Activated CD4-positive, alpha-beta memory T cell treated with anti-CD3 and anti-CD28 coated beads, Interleukin-2, amount 10 ng/mL, durations not matched to agents 7 days and 5 days (primary cell): ENCODE measurements at regions of chr5 and their contacts with region 1.

Region 1: GRCh38 chr5:160418561-160419457 is at the start of gene SLU7:
- DNase-seq: peak; percentile 94
- H3K4me3 Mint-ChIP-seq: peak within 1 kb of the TSS; percentile 90
- H3K27ac Mint-ChIP-seq: peak within 1 kb of the TSS; percentile 91
- H3K4me1 Mint-ChIP-seq: peaks cover 59% of the 10 kb centered on the region
- H3K27me3 Mint-ChIP-seq: no peaks in the 10 kb centered on the region
- total RNA-seq, gene SLU7: 65.5 to 72.7 TPM

Region 2: GRCh38 chr5:160399402-160400353 is 19.1 kb before region 1 on chr5 and contains the start of gene FAM200C:
- CTCF ChIA-PET with region 1: interaction called, 6 read pairs
- POLR2A ChIA-PET with region 1: interaction called, 14 read pairs
- DNase-seq: peak; percentile 75
- H3K4me3 Mint-ChIP-seq: peak within 1 kb of the TSS; percentile 75
- H3K27ac Mint-ChIP-seq: peak within 1 kb of the TSS; percentile 38
- H3K4me1 Mint-ChIP-seq: peaks cover 17% of the 10 kb centered on the region
- H3K27me3 Mint-ChIP-seq: no peaks in the 10 kb centered on the region
- total RNA-seq, gene FAM200C: 0.95 to 1.0 TPM

Region 3: DNA sequence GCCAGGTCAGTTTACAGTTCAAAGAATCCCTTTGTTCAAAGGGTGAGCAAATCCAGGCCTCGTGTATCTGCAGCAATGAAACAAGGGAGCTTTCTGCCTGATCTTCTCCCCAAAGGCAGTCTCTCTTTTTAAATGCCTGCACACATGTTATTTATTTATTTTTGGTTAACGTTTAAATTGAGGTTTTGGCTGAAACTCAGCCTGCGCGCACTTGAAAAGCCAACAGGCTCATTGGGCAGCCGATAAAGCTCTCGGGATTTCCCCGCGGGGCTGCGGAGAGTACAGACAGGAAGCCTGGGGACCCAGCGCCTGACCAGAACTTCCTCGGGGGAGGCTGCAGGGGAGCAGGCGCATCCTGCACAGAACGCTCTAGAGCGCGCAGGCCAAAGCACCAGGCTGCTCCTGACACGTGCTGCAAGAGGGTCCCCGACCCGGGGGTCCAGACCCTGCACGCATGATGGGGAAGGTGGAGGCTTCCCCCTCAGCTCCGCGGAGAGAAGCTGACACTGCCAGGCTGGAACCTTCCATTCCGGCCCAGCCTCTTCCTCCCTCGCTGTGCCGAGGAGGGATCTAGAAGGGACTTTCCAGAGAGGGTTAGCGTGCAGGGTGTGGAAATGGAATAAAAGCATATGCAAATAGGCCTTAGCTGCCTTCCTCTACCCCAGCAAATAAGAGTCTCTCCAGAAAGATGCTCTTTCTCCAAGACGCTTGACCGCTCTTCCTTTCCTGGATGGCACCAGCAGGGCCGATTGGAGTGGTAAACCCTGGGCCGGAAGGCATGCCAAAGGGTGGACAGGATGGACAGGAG is 49.0 kb after region 1 on chr5:
- CTCF ChIA-PET with region 1: interaction called, 3 read pairs
- POLR2A ChIA-PET with region 1: interaction called, 104 read pairs
- DNase-seq: peak; percentile 89
- H3K4me3 Mint-ChIP-seq: peak overlapping the region; percentile 99
- H3K27ac Mint-ChIP-seq: peak overlapping the region; percentile 99
- H3K4me1 Mint-ChIP-seq: peaks cover 71% of the 10 kb centered on the region
- H3K27me3 Mint-ChIP-seq: no peaks in the 10 kb centered on the region

Region 4: GRCh38 chr5:160475864-160476438 is 57.1 kb after region 1 on chr5:
- CTCF ChIA-PET with region 1: no interaction called
- POLR2A ChIA-PET with region 1: interaction called, 104 read pairs
- DNase-seq: no peak
- H3K4me3 Mint-ChIP-seq: peak overlapping the region; percentile 50
- H3K27ac Mint-ChIP-seq: peak overlapping the region; percentile 62
- H3K4me1 Mint-ChIP-seq: peaks cover 91% of the 10 kb centered on the region
- H3K27me3 Mint-ChIP-seq: no peaks in the 10 kb centered on the region

Region 5: DNA sequence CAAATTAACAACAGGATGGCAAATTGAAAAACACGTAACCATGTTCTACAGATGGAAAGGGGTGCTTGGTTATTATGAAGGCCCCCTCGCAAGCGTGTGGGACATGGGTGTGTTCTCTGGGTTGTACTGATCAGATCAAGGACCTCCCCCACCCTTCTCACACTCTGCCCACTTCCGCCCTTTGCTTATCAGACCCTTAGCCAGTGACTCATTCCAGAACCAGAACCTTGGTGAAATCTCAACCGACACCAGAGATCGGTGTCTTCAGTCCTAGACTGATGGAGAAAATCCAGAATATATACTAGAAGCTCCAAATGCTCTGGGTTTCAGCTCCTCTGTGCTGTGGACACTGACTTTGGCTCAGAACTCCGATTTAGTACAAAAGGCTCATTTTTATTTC is 67.8 kb after region 1 on chr5:
- CTCF ChIA-PET with region 1: no interaction called
- POLR2A ChIA-PET with region 1: interaction called, 10 read pairs
- DNase-seq: peak; percentile 80
- H3K4me3 Mint-ChIP-seq: peak overlapping the region; percentile 25
- H3K27ac Mint-ChIP-seq: peak overlapping the region; percentile 83
- H3K4me1 Mint-ChIP-seq: peaks cover 69% of the 10 kb centered on the region
- H3K27me3 Mint-ChIP-seq: no peaks in the 10 kb centered on the region

Region 6: DNA sequence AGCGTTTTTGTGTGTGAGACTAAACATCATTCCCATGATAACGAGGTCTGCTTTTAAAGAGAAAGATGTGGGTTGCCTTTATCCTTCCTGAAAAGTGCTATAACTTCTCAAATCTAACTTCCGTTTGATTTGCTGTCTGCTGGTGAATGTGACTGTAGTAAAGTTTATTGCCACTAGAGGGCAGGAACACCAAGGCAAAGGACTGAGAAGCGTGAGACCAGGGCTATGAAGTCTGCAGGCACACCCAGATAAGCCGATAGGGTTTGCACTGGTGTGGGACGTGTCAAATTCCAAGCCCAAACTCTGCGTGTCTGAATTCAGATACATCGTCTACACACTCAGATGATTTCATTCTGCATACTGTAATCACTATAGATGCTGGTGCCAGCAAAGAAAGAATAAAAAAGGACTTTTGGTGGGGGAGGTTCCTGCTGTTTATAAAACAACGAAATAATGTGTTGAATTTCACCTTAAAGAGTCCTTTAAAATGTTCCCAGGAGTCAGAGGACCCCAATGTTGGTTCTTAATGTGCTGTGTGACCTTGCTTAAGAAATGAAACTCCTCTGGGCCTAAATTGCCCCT is 90.1 kb after region 1 on chr5:
- CTCF ChIA-PET with region 1: interaction called, 5 read pairs
- POLR2A ChIA-PET with region 1: interaction called, 25 read pairs
- DNase-seq: peak; percentile 75
- H3K4me3 Mint-ChIP-seq: no peak overlapping the region
- H3K27ac Mint-ChIP-seq: peak overlapping the region; percentile 24
- H3K4me1 Mint-ChIP-seq: peaks cover 51% of the 10 kb centered on the region
- H3K27me3 Mint-ChIP-seq: peaks cover 9% of the 10 kb centered on the region

Region 7: GRCh38 chr5:160537116-160537515 is 118.3 kb after region 1 on chr5:
- CTCF ChIA-PET with region 1: no interaction called
- POLR2A ChIA-PET with region 1: no interaction called
- DNase-seq: no peak
- H3K4me3 Mint-ChIP-seq: no peak overlapping the region
- H3K27ac Mint-ChIP-seq: no peak overlapping the region
- H3K4me1 Mint-ChIP-seq: no peaks in the 10 kb centered on the region
- H3K27me3 Mint-ChIP-seq: no peaks in the 10 kb centered on the region